ENCODE measurements at regions of chr15 and their contacts with region 1.

Region 1: DNA sequence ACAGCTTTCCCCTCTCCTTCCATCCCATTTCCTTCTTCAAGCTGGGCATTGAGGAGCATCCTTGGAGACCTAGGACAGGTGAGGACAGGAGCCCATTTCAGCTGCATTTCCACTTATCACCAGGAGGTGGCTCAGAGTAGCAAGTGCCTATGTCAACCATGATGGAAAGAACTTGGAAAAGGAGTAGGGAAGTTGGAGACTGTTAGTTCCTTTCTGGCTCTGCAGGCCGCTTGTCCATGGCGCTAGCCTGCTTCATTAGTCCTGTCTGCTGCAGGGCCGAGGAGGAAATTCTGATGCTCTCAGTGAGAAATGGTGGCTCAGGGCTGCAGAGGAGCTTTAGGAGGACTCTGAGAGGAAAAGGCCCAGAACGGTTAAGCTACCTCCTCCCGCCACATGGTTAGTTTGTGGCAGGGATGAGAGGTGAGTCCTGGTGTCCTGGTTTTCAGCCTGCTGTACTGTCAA is 7.0 kb upstream of the CD276 start:
- H3K4me3 ChIP-seq: no peak overlapping the region
- H3K27ac ChIP-seq: no peak overlapping the region
- H3K4me1 ChIP-seq: no peaks in the 10 kb centered on the region
- CTCF ChIP-seq: no peak

Region 2: DNA sequence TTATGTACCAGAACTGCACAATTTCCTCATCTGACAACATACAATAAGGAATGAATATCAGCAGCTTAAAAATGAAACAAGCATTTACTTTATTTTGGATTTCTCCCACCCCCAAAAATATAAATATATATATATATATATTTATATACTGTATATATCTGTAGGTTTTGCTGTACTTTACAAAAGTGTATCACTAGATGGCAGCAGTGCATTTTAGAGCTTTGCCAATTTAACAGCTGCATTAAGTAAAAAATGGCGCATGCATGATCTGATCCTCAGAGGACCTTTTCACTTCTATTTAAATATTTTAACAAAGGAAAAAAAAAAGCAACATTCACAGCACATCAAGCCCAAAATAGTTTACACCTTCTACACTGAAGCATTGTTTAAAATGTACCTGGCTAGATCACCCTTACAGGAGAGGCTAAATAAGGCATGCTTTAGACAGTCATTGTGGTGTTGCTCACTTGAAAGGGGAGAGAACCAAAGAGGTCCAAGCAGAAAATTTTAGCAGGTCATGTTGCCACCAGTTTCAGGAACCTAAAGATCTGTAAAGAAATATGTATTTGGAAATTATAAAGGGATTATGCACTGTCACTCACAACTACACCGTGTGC is 116.6 kb before region 1 on chr15:
- CTCF ChIA-PET with region 1: interaction called, 10 read pairs
- POLR2A ChIA-PET with region 1: no interaction called
- H3K4me3 ChIP-seq: no peak overlapping the region
- H3K27ac ChIP-seq: no peak overlapping the region
- H3K4me1 ChIP-seq: peaks cover 7% of the 10 kb centered on the region; the same call in 1 of the 2 replicates
- CTCF ChIP-seq: no peak

Region 3: GRCh38 chr15:73660455-73660854 is 16.7 kb before region 1 on chr15:
- CTCF ChIA-PET with region 1: interaction called, 15 read pairs
- POLR2A ChIA-PET with region 1: no interaction called
- H3K4me3 ChIP-seq: no peak overlapping the region
- H3K27ac ChIP-seq: no peak overlapping the region
- H3K4me1 ChIP-seq: peaks cover 15% of the 10 kb centered on the region; the same call in 1 of the 2 replicates
- CTCF ChIP-seq: no peak

Region 4: DNA sequence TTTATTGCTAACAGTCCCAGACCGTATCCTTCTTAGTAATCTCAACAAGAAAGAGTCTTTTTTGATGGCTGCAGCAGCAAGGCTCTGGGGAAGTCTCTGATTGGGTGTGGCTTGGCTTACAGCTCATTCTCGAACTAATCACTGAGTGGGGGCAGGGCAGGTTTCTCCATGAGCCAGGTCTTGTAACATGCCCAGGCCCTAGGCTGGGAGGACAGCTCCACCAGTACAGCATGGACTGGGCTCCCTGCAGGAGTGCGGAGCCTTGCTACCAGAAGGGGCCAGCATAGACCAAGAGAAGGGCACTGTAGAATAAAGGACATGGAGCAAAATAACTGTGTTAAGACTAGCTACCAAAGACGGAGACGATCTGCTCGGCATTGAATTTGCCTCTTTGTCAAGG is 14.2 kb after region 1 on chr15:
- CTCF ChIA-PET with region 1: interaction called, 261 read pairs
- POLR2A ChIA-PET with region 1: no interaction called
- H3K4me3 ChIP-seq: no peak overlapping the region
- H3K27ac ChIP-seq: no peak overlapping the region
- H3K4me1 ChIP-seq: peaks cover 17% of the 10 kb centered on the region; the same call in 1 of the 2 replicates
- CTCF ChIP-seq: peak; percentile 88

Region 5: GRCh38 chr15:74011610-74012009 is 334.4 kb after region 1 on chr15:
- CTCF ChIA-PET with region 1: no interaction called
- POLR2A ChIA-PET with region 1: no interaction called
- H3K4me3 ChIP-seq: no peak overlapping the region
- H3K27ac ChIP-seq: no peak overlapping the region
- H3K4me1 ChIP-seq: no peaks in the 10 kb centered on the region
- CTCF ChIP-seq: no peak

Measured in HEK293 (cell line).